K562 (cell line): ENCODE measurements at regions of chr2 and their contacts with region 1.

Region 1: GRCh38 chr2:16656784-16657391 is 8.7 kb downstream of the CYRIA start:
- DNase-seq: no peak
- ATAC-seq: peak; percentile 38; the same call in 1 of the 3 replicates
- H3K4me3 ChIP-seq: no peak overlapping the region
- H3K27ac ChIP-seq: no peak overlapping the region
- H3K4me1 ChIP-seq: peaks cover 3 to 8% of the 10 kb centered on the region in 2 experiments; a peak in 2 of 5 replicates
- H3K27me3 ChIP-seq: no peaks in the 10 kb centered on the region
- CTCF ChIP-seq: no peak
- EP300 ChIP-seq: no peak
- POLR2A ChIP-seq: no peak
- RAD21 ChIP-seq: no peak

Region 2: GRCh38 chr2:16644221-16644925 is 12.5 kb before region 1 on chr2:
- CTCF ChIA-PET with region 1: no interaction called
- POLR2A ChIA-PET with region 1: interaction called, 15 read pairs
- in situ Hi-C with region 1: no loop called
- intact Hi-C with region 1: no loop called
- DNase-seq: peak in 1 of 4 experiments; percentile 33
- ATAC-seq: peak; percentile 42
- H3K4me3 ChIP-seq: no peak overlapping the region
- H3K27ac ChIP-seq: 0 out of 3 replicates have a peak overlapping the region, but pooled peaks have one; percentile 18
- H3K4me1 ChIP-seq: peaks cover 13 to 64% of the 10 kb centered on the region in 2 experiments; a peak in 4 of 5 replicates
- H3K27me3 ChIP-seq: no peaks in the 10 kb centered on the region
- CTCF ChIP-seq: no peak
- EP300 ChIP-seq: no peak
- POLR2A ChIP-seq: no peak
- RAD21 ChIP-seq: no peak

Region 3: GRCh38 chr2:16687955-16688354 is 31.1 kb after region 1 on chr2:
- CTCF ChIA-PET with region 1: no interaction called
- POLR2A ChIA-PET with region 1: no interaction called
- in situ Hi-C with region 1: no loop called
- intact Hi-C with region 1: no loop called
- DNase-seq: no peak
- ATAC-seq: no peak
- H3K4me3 ChIP-seq: no peak overlapping the region
- H3K27ac ChIP-seq: no peak overlapping the region
- H3K4me1 ChIP-seq: no peaks in the 10 kb centered on the region
- H3K27me3 ChIP-seq: peaks cover 6 to 30% of the 10 kb centered on the region in 2 experiments; a peak in 3 of 5 replicates
- CTCF ChIP-seq: no peak
- EP300 ChIP-seq: no peak
- POLR2A ChIP-seq: no peak
- RAD21 ChIP-seq: no peak